ENCODE measurements at regions of chrX and their contacts with region 1.

Region 1: DNA sequence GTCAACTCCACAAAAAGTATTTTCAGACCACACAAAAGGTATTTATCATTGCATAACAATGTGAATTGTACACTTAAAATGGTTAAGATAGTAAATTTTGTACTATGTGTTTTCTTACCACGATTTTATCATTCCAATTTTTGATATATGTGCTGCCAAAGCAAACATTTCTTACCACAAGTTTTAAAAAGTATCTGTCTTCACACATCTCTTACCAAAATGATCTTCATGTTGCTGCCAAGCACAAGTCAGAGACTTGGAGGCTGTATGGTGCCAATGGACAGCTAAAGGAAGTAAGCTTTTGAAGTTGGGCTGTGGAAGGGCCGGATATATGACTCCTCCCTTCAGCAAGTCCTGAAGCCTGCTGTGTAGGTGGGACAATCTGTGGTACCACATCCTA is 67.9 kb downstream of the TMLHE start:
- DNase-seq: no peak
- ATAC-seq: no peak

Region 2: GRCh38 chrX:155612312-155613224 is 67.7 kb after region 1 on chrX and contains the start of gene TMLHE:
- intact Hi-C with region 1: loop called in 1 of 2 experiments (anchors 10 kb)
- DNase-seq: peak; percentile 77
- ATAC-seq: peak; percentile 98 to 99
- total RNA-seq, gene TMLHE: 26.6 to 29.0 TPM

Region 3: GRCh38 chrX:155666741-155667140 is 121.9 kb after region 1 on chrX:
- intact Hi-C with region 1: no loop called
- DNase-seq: no peak
- ATAC-seq: no peak

Region 4: DNA sequence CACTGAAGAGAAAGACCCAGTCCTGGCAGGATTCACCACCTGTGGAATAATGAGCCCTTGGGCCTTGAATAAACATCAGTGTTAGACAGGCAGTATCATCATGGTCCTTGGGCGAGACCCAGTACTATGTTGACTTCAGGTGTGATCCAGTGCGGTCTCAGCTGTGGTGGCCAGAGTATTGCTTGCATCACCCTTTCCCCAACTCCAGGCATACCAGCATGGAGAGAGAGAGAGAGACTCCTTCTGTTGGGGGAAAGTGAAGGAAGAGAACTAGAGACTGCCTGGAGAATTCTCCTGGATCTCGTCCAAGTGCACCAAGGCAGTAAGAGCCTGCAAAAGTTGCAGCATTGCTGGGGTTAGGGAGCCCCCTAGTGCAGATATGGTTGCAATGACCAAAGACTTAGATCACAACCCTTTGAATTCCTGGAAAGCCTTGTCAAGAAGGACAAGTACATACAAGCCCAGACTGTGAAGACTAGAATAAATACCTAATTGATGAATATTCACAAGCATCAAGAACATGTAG is 275.1 kb after region 1 on chrX:
- intact Hi-C with region 1: no loop called
- DNase-seq: peak; percentile 45
- ATAC-seq: peak; percentile 75 to 82

Measured in left cardiac atrium (tissue), 4 donors.